ENCODE measurements at regions of chr15 and their contacts with region 1.

Region 1: GRCh38 chr15:51192521-51193280 is 98.0 kb upstream of the TNFAIP8L3 start:
- DNase-seq: no peak
- H3K4me3 ChIP-seq: no peak overlapping the region
- H3K27me3 ChIP-seq: peaks cover 7% of the 10 kb centered on the region
- CTCF ChIP-seq: peak; percentile 97

Region 2: GRCh38 chr15:51132384-51133139 is 60.1 kb before region 1 on chr15:
- CTCF ChIA-PET with region 1: interaction called, 14 read pairs
- POLR2A ChIA-PET with region 1: no interaction called
- DNase-seq: peak; percentile 82
- H3K4me3 ChIP-seq: no peak overlapping the region
- H3K27me3 ChIP-seq: peaks cover 2% of the 10 kb centered on the region
- CTCF ChIP-seq: peak; percentile 99

Region 3: DNA sequence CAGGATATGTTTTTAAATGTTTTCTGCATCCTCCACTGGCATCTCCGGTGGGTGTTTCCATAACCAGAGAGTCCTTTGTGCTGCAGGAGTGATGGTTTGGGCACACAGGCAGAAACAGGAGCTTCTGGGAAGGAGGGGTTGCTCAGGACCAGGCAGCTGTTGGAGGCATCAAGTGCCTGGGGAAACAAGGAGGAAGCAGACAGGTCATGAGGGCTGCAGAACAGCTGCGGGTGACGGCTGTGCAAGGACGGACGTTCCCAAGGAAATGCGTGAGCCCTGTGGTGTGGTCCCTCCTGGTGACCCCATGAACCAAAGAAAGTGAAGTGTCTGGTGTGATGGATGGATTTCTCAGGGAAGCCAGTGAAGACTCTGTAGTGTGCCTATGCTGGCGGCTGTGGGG is 36.8 kb before region 1 on chr15:
- CTCF ChIA-PET with region 1: interaction called, 281 read pairs
- POLR2A ChIA-PET with region 1: no interaction called
- DNase-seq: no peak
- H3K4me3 ChIP-seq: no peak overlapping the region
- H3K27me3 ChIP-seq: peaks cover 14% of the 10 kb centered on the region
- CTCF ChIP-seq: no peak

Region 4: DNA sequence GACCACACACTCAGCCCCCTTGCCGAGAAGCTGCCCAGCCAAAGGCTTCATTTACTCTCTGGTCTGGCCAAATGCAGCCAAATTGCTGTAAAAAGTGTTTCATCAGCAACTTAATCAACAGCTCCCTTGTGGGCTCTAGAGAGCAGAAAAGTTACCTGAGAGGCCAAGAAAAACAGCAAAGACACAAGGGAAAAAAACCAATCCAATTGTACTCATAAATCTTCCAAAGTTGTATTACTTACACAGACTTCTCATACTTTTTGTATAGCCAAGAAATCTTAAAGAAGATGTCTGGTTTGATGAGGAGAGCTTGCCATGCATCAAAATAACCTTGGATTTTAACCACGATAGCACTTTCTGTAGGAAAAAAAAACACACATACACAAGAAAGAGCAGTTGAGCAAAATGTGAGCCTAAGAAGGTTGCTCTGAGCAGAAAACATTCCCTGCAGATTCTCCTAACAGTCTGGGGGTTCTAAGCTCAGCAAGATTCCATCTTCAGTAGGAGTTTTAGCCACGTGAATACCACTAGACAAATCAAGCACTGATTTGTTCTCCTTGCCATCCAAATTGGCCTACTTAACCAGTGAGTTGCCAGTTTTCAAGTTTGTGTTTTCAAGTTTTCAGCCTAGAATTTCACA is 25.7 kb after region 1 on chr15:
- CTCF ChIA-PET with region 1: interaction called, 13 read pairs
- POLR2A ChIA-PET with region 1: no interaction called
- DNase-seq: no peak
- H3K4me3 ChIP-seq: no peak overlapping the region
- H3K27me3 ChIP-seq: no peaks in the 10 kb centered on the region
- CTCF ChIP-seq: no peak

Region 5: GRCh38 chr15:51322621-51323296 is 130.1 kb after region 1 on chr15:
- CTCF ChIA-PET with region 1: no interaction called
- POLR2A ChIA-PET with region 1: no interaction called
- DNase-seq: no peak
- H3K4me3 ChIP-seq: no peak overlapping the region
- H3K27me3 ChIP-seq: peaks cover 4% of the 10 kb centered on the region
- CTCF ChIP-seq: no peak

Region 6: GRCh38 chr15:51380999-51381795 is 188.5 kb after region 1 on chr15:
- CTCF ChIA-PET with region 1: interaction called, 10 read pairs
- POLR2A ChIA-PET with region 1: no interaction called
- DNase-seq: no peak
- H3K4me3 ChIP-seq: no peak overlapping the region
- H3K27me3 ChIP-seq: peaks cover 2% of the 10 kb centered on the region; the same call in 1 of the 2 replicates
- CTCF ChIP-seq: peak; percentile 88